Dorsolateral prefrontal cortex (tissue), 120 donors: ENCODE measurements at regions of chr4 and their contacts with region 1.

Region 1: DNA sequence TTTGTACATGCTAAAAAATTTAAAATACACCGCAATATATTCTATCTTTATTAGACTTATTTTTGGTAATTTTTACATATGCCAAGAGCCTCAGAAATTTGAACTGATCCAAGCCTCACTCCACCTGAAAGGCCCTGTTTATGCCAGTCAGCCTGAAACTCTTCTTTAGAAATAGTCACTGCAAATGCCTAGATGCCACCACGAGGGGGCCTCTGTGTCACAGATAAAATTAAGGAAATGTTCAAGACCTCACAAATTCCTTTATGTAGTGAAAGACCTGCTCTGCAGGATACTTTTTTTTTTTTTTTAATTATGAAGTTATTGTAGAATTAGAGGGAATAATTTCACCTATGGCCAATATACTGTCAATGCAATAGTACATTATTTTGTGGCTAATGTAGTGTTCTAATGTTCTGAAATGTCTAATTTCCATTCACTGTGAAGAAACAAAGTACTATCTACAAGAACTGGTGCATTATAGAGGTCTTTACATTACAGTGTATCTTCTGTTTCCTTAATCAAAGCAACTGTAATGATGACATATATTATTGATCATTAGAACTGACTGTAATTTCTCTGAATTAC is 69.8 kb downstream of the DTHD1 start:
- DNase-seq: peak; percentile 28 to 93 (median 77)
- H3K4me3 ChIP-seq: peak overlapping the region in 9 of 59 donors; percentile 7 to 50 (median 29)
- H3K27ac ChIP-seq: peak overlapping the region in 54 of 59 donors; percentile 34 to 90 (median 78)
- H3K27me3 ChIP-seq: no peaks in the 10 kb centered on the region
- CTCF ChIP-seq: peak; percentile 66 to 96 (median 87)

Region 2: GRCh38 chr4:36244257-36245079 is 106.7 kb before region 1 on chr4 and contains the start of gene ARAP2:
- intact Hi-C with region 1: loop called in 1 of 2 experiments (anchors 5 kb)
- DNase-seq: peak in 8 of 10 donors; percentile 30 to 79 (median 46)
- H3K4me3 ChIP-seq: peak within 1 kb of the TSS; percentile 63 to 93 (median 81)
- H3K27ac ChIP-seq: peak within 1 kb of the TSS; percentile 86 to 99 (median 97)
- H3K27me3 ChIP-seq: no peaks in the 10 kb centered on the region
- CTCF ChIP-seq: peak in 12 of 56 donors; percentile 0 to 39 (median 21)
- total RNA-seq, gene ARAP2: 87.3 to 271 (median 162) TPM

Region 3: GRCh38 chr4:36285784-36286480 is 65.2 kb before region 1 on chr4:
- intact Hi-C with region 1: loop called in 1 of 2 experiments (anchors 2 kb)
- DNase-seq: no peak
- H3K4me3 ChIP-seq: no peak overlapping the region
- H3K27ac ChIP-seq: peak overlapping the region in 51 of 59 donors; percentile 24 to 99 (median 94)
- H3K27me3 ChIP-seq: no peaks in the 10 kb centered on the region
- CTCF ChIP-seq: no peak

Region 4: DNA sequence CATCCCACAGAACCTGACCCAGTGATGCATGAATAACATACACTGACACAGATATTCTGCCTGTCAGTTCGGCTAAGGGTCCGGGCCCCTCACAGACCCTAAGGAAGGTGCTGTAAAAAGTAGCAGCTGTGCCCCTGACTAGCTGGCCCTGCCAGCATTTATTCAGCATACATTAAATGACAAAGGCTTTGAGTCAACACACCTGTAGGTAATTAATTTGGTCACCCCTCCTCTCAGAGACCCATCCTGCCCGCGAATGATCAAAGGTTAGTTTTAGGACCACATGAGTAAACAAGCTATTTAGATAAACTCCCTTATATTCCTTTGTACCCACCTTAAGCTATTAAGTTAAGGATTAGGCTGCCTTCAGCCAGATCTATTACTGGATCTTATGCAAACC is 464.4 kb after region 1 on chr4:
- intact Hi-C with region 1: no loop called
- DNase-seq: no peak
- H3K4me3 ChIP-seq: no peak overlapping the region
- H3K27ac ChIP-seq: no peak overlapping the region
- H3K27me3 ChIP-seq: no peaks in the 10 kb centered on the region
- CTCF ChIP-seq: no peak

Region 5: GRCh38 chr4:37389967-37390580 is 1038.9 kb after region 1 on chr4:
- intact Hi-C with region 1: loop called in 1 of 2 experiments (anchors 10 kb)
- DNase-seq: no peak
- H3K4me3 ChIP-seq: peak overlapping the region in 22 of 59 donors; percentile 3 to 47 (median 23)
- H3K27ac ChIP-seq: no peak overlapping the region
- H3K27me3 ChIP-seq: no peaks in the 10 kb centered on the region
- CTCF ChIP-seq: peak; percentile 70 to 98 (median 83)